ENCODE measurements at regions of chr1 and their contacts with region 1.

Region 1: DNA sequence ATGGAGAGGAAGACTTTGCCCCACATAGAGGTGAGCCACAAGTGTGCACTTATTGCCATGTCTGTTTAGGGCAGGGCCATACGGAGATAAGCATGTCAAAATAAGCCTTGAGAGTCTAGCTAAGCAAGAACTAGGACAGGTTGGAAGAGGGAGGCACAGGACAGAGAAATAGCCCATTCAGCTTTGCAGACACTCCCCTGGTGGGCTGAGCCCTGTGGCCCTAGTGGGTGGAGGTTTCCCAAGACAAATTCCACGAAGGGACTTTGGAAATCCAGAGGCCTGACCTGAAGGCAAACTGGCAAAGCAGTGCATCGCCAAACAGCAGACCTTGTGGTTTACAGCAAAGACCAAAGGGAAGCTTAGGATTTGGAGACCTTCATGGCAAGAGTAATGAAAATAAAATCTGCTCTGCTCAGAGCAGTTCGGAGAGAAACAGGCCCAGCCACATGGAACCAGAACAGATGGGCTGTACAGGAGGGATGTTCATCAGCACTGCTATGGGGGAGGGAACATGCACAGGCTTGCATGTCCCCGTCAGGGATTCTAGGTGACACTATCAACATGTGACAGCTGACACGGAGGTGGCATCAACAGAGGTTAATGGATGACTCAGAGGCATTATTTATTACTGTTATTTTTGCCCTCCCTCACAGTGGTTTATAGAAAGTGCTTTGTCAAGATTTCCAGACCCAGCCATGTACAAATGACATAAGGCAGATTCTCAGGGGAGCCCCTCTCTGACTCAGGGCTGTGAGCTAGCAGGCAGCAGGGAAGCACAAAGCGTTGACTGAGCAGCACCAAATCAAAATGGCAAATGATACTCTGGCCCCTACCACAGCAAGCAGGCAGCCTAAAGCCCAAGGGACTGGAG is 90.1 kb upstream of the IRF2BP2 start:
- DNase-seq: peak in 1 of 2 donors; percentile 48
- H3K4me3 ChIP-seq: no peak overlapping the region
- H3K27ac ChIP-seq: peak overlapping the region; percentile 51 to 67
- H3K4me1 ChIP-seq: peaks cover 0 to 21% (median 14%) of the 10 kb centered on the region in 4 donors
- H3K27me3 ChIP-seq: no peaks in the 10 kb centered on the region
- CTCF ChIP-seq: no peak

Region 2: GRCh38 chr1:234661317-234661928 is 38.6 kb before region 1 on chr1:
- intact Hi-C with region 1: loop called (anchors 5 kb)
- DNase-seq: no peak
- H3K4me3 ChIP-seq: no peak overlapping the region
- H3K27ac ChIP-seq: no peak overlapping the region
- H3K4me1 ChIP-seq: peaks cover 0 to 8% (median 3%) of the 10 kb centered on the region in 4 donors
- H3K27me3 ChIP-seq: no peaks in the 10 kb centered on the region
- CTCF ChIP-seq: no peak

Measured in tibial artery (tissue), 4 donors.